B cell (primary cell): ENCODE measurements at regions of chr2 and their contacts with region 1.

Region 1: DNA sequence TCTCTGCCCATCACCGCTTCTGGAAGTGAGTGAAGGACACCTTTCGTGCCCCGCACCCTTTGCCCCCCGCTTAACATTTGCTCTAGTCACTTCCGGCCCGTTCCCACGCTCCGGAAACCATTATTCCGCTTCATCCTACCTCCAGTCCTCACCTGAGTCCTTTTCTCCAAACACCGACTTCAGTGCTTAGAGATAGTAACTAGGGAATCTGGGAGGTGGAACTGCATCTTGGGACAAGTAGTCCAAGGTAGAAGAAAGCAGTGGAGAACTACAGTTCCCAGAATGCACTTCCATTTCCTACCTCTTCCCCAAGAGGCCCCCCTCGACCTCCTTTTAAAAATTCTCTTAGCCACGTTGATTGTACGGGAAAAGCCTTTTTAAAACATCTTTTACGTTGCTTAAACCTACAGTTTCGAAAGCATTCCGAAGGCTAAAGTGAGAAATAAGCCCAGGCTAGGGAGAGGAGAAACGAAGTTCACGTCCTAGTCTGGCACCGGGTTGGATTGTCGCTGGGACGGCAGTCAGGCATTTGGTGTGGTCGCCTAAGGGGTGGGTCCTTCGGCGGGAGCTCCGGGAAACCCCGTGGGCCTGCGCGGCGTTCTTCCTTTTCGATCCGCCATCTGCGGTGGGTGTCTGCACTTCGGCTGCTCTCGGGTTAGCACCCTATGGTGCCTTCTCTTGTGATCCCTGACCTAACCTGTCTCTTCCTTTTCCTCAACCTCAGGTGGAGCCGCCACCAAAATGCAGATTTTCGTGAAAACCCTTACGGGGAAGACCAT is at the starts of genes CLHC1 and RPS27A:
- DNase-seq: peak; percentile 97
- ATAC-seq: peak; percentile 87
- H3K4me3 ChIP-seq: peak within 1 kb of the TSS; percentile 72 to 98 (median 94)
- H3K4me3 Mint-ChIP-seq: peak within 1 kb of the TSS; percentile 94
- H3K27ac ChIP-seq: peak within 1 kb of the TSS; percentile 95 to 98
- H3K27ac Mint-ChIP-seq: peak within 1 kb of the TSS; percentile 99
- H3K4me1 ChIP-seq: peaks cover 28 to 39% of the 10 kb centered on the region in 2 donors
- H3K4me1 Mint-ChIP-seq: peaks cover 54% of the 10 kb centered on the region
- H3K27me3 ChIP-seq: no peaks in the 10 kb centered on the region
- H3K27me3 Mint-ChIP-seq: no peaks in the 10 kb centered on the region
- CTCF ChIP-seq: no peak
- total RNA-seq, gene CLHC1: 12.0 and 12.8 TPM in 2 replicates
- total RNA-seq, gene RPS27A: 1,561 and 1,678 TPM in 2 replicates

Region 2: GRCh38 chr2:55268907-55269644 is 36.8 kb after region 1 on chr2 and contains the start of gene MTIF2:
- CTCF ChIA-PET with region 1: no interaction called
- POLR2A ChIA-PET with region 1: interaction called, 6 read pairs
- intact Hi-C with region 1: loop called (anchors 1 kb)
- DNase-seq: peak; percentile 91
- ATAC-seq: peak; percentile 90
- H3K4me3 ChIP-seq: peak within 1 kb of the TSS; percentile 70 to 92 (median 82)
- H3K4me3 Mint-ChIP-seq: peak within 1 kb of the TSS; percentile 97
- H3K27ac ChIP-seq: peak within 1 kb of the TSS; percentile 78 to 83
- H3K27ac Mint-ChIP-seq: peak within 1 kb of the TSS; percentile 95
- H3K4me1 ChIP-seq: peaks cover 12 to 14% of the 10 kb centered on the region in 2 donors
- H3K4me1 Mint-ChIP-seq: peaks cover 18% of the 10 kb centered on the region
- H3K27me3 ChIP-seq: no peaks in the 10 kb centered on the region
- H3K27me3 Mint-ChIP-seq: no peaks in the 10 kb centered on the region
- CTCF ChIP-seq: no peak
- total RNA-seq, gene MTIF2: 36.7 and 37.4 TPM in 2 replicates

Region 3: DNA sequence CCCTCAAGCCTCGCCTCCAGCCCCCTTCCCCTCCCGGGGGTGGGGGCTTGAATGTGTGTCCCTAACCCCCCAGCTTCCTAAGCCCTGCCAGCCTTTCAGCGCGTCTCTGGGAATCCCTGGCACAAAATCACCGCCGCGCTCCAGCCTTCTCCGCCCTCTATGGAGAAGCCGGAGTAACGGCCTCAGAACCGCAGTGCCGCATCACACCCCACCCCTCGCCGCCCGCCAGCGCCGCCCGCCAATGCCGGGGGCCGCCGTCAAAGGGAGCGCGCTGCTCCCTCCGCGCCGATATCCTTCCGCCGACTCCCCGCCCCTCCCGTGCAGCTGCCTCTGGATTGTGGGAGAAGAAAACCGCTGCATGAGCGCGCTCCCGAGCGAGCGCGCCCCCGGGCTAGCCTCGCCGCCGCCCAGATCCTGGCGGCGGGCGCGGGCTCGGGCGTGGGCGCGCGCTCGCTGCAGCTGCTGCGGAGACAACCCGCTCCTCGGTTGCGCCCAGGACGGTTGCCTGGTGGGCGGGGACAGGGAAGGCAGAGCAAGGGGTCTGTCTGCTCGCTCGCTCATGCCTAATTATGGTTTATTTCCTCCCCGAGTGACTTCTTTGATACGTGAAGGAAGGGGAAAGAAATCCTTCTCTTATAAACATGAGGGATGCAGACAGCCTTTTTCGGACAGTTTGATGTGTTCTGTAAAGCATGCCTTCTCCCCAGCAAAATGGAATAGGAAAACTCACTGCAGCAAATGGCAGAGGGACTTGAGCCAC is 187.6 kb after region 1 on chr2 and contains the start of gene CCDC88A:
- CTCF ChIA-PET with region 1: no interaction called
- POLR2A ChIA-PET with region 1: no interaction called
- intact Hi-C with region 1: loop called (anchors 5 kb)
- DNase-seq: peak; percentile 95
- ATAC-seq: peak; percentile 85
- H3K4me3 ChIP-seq: peak within 1 kb of the TSS; percentile 65 to 91 (median 82)
- H3K4me3 Mint-ChIP-seq: peak within 1 kb of the TSS; percentile 95
- H3K27ac ChIP-seq: peak within 1 kb of the TSS; percentile 68 to 73
- H3K27ac Mint-ChIP-seq: peak within 1 kb of the TSS; percentile 95
- H3K4me1 ChIP-seq: peaks cover 20 to 25% of the 10 kb centered on the region in 2 donors
- H3K4me1 Mint-ChIP-seq: peaks cover 38% of the 10 kb centered on the region
- H3K27me3 ChIP-seq: peaks cover 0 to 4% (median 0%) of the 10 kb centered on the region in 4 experiments
- H3K27me3 Mint-ChIP-seq: no peaks in the 10 kb centered on the region
- CTCF ChIP-seq: no peak
- total RNA-seq, gene CCDC88A: 26.0 and 27.6 TPM in 2 replicates